Activated B cell treated with CpG ODN at 0.5 μM for 24 hours (primary cell): ENCODE measurements at regions of chr3 and their contacts with region 1.

Region 1: GRCh38 chr3:187745201-187746058 is at the start of gene BCL6:
- DNase-seq: peak; percentile 77
- ATAC-seq: peak; percentile 60
- H3K4me3 Mint-ChIP-seq: peak within 1 kb of the TSS; percentile 98
- H3K27ac Mint-ChIP-seq: peak within 1 kb of the TSS; percentile 98
- H3K4me1 Mint-ChIP-seq: peaks cover 79% of the 10 kb centered on the region
- H3K27me3 Mint-ChIP-seq: no peaks in the 10 kb centered on the region
- CTCF ChIP-seq: no peak
- total RNA-seq, gene BCL6: 100 and 112 TPM in 2 replicates

Region 2: GRCh38 chr3:187567661-187568121 is 177.7 kb before region 1 on chr3:
- CTCF ChIA-PET with region 1: no interaction called
- POLR2A ChIA-PET with region 1: no interaction called
- intact Hi-C with region 1: no loop called
- DNase-seq: no peak
- ATAC-seq: no peak
- H3K4me3 Mint-ChIP-seq: no peak overlapping the region
- H3K27ac Mint-ChIP-seq: no peak overlapping the region
- H3K4me1 Mint-ChIP-seq: no peaks in the 10 kb centered on the region
- H3K27me3 Mint-ChIP-seq: peaks cover 7% of the 10 kb centered on the region
- CTCF ChIP-seq: no peak

Region 3: DNA sequence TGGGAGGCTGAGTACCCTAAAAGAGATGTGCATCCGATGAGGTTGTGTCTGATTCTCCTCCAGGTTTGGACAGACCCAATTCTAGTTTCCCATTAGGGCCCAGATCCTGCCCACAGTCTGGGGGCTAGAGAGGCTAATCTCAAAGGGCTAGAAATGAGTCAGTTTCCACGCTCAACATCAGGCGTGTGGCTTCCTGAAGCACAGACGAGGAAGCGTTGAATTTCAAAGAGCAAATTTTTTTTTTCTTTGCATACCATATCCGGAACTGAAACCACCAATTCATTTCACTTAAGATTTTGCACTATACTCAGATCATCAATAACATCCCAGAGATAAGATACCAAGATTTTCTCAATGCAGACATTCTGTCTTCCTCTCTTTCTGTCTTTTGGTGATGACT is 173.6 kb after region 1 on chr3:
- CTCF ChIA-PET with region 1: interaction called, 5 read pairs
- POLR2A ChIA-PET with region 1: interaction called, 3 read pairs
- intact Hi-C with region 1: loop called (anchors 1 kb)
- DNase-seq: peak; percentile 36
- ATAC-seq: peak; percentile 89
- H3K4me3 Mint-ChIP-seq: peak overlapping the region; percentile 77
- H3K27ac Mint-ChIP-seq: peak overlapping the region; percentile 86
- H3K4me1 Mint-ChIP-seq: peaks cover 32% of the 10 kb centered on the region
- H3K27me3 Mint-ChIP-seq: peaks cover 15% of the 10 kb centered on the region
- CTCF ChIP-seq: no peak

Region 4: DNA sequence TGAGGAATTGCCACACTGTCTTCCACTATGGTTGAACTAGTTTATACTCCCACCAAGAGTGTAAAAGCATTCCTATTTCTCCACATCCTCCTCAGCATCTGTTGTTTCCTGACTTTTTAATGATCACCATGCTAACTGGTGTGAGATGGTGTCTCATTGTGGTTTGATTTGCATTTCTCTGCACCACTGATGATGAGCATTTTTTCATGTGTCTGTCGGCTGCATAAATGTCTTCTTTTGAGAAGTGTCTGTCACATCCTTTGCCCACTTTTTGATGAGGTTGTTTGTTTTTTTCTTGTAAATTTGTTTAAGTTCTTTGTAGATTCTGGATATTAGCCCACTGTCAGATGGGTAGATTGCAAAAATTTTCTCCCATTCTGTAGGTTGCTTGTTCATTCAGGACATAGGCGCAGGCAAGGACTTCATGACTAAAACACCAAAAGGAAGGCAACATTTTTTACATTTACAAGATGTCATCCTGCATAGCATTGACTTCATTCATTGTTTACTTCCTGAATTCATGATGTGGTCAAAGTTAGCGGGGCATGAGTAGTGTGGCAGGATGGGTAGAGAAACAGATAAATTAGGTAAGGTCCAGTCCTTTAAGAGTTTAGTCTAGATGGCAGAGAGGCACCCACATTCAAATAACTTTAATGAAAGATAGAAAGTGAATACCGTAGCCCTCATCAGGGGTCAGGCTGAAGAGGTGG is 363.4 kb after region 1 on chr3:
- CTCF ChIA-PET with region 1: no interaction called
- POLR2A ChIA-PET with region 1: interaction called, 4 read pairs
- intact Hi-C with region 1: loop called (anchors 5 kb)
- DNase-seq: no peak
- ATAC-seq: peak; percentile 73
- H3K4me3 Mint-ChIP-seq: peak overlapping the region; percentile 42
- H3K27ac Mint-ChIP-seq: peak overlapping the region; percentile 78
- H3K4me1 Mint-ChIP-seq: peaks cover 26% of the 10 kb centered on the region
- H3K27me3 Mint-ChIP-seq: no peaks in the 10 kb centered on the region
- CTCF ChIP-seq: no peak

Region 5: GRCh38 chr3:188294823-188295487 is 549.5 kb after region 1 on chr3:
- CTCF ChIA-PET with region 1: interaction called, 5 read pairs
- POLR2A ChIA-PET with region 1: interaction called, 20 read pairs
- intact Hi-C with region 1: no loop called
- DNase-seq: no peak
- ATAC-seq: no peak
- H3K4me3 Mint-ChIP-seq: peak overlapping the region; percentile 17
- H3K27ac Mint-ChIP-seq: peak overlapping the region; percentile 25
- H3K4me1 Mint-ChIP-seq: peaks cover 85% of the 10 kb centered on the region
- H3K27me3 Mint-ChIP-seq: no peaks in the 10 kb centered on the region
- CTCF ChIP-seq: no peak

Region 6: GRCh38 chr3:188362405-188362831 is 617.0 kb after region 1 on chr3:
- CTCF ChIA-PET with region 1: interaction called, 15 read pairs
- POLR2A ChIA-PET with region 1: interaction called, 51 read pairs
- intact Hi-C with region 1: loop called (anchors 1 kb)
- DNase-seq: no peak
- ATAC-seq: peak; percentile 63
- H3K4me3 Mint-ChIP-seq: peak overlapping the region; percentile 24
- H3K27ac Mint-ChIP-seq: peak overlapping the region; percentile 80
- H3K4me1 Mint-ChIP-seq: peaks cover 78% of the 10 kb centered on the region
- H3K27me3 Mint-ChIP-seq: no peaks in the 10 kb centered on the region
- CTCF ChIP-seq: no peak

Region 7: DNA sequence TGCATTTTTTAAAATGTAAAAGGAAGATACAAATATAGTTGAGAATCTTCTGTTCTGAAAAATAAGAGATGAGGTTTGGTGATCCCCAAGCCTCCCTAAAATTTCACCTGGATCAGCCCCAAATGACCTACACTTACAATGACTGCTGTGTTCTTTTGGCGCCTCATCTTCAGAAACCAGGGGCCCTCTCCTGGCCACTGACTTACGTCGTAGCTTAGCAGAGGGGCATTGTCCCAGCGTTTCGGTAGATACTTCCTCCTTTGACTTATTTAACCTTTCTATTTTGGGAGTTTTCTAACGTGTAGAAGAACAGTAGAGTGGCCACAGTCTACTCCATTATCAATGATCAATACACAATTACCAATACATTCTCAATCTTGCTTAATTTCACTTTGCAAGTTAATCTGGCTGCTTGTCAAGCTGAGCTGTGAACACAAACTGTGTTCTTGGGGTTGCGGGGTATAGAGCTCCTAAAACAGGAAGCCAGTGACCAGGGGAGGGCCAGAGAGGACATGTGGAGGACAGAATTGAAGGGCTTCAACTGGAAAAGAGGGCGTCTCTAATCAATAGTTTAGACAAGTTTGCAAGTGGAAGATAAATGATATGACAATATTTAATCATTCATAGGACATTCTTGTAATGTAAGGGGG is 828.0 kb after region 1 on chr3:
- CTCF ChIA-PET with region 1: interaction called, 22 read pairs
- POLR2A ChIA-PET with region 1: interaction called, 10 read pairs
- intact Hi-C with region 1: no loop called
- DNase-seq: no peak
- ATAC-seq: peak; percentile 71
- H3K4me3 Mint-ChIP-seq: peak overlapping the region; percentile 39
- H3K27ac Mint-ChIP-seq: peak overlapping the region; percentile 82
- H3K4me1 Mint-ChIP-seq: peaks cover 32% of the 10 kb centered on the region
- H3K27me3 Mint-ChIP-seq: no peaks in the 10 kb centered on the region
- CTCF ChIP-seq: no peak

Region 8: DNA sequence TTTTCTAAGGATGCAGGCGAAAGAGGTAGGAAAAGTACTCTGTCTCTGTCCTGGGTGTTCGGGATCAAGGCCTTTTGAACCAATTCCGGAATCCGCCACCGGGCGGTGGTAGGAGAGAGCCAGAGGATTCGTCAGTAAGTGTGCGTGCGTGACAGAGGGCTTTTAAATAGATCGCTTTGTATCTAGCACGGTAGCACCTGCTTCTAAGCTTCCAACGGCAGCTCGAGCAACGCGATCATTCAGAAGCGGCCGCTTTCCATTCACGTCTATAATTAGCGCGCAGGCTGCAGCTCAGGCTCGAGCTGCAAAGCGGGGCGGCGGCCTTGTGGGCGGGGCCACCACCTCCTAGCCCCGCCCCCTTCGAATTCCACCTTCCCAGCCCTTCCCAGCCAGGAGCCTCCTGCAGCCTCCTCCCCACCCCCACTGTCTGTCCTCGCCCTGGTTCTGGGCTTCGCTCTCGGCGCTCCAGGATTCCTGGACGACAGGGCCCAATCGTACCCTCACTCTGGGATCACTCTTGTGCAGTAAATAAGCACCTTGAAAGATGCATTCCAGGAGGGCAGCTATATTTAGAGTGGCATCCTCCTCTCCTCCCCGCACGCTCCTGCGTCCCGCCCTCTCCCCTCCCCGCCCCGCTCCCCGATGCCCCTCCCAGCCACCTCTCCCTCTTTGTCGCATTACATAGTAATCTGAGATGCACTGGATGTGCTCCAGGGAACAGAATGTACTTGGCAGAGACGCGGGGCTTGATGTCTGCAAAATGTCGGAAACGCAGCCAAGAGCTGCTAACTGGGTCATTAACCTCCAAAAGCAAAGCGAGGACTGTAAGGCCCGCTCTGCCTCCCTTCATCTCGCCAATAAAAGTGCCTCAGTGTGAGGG is 1202.2 kb after region 1 on chr3:
- CTCF ChIA-PET with region 1: interaction called, 545 read pairs
- POLR2A ChIA-PET with region 1: interaction called, 137 read pairs
- intact Hi-C with region 1: no loop called
- DNase-seq: no peak
- ATAC-seq: peak; percentile 19
- H3K4me3 Mint-ChIP-seq: peak overlapping the region; percentile 70
- H3K27ac Mint-ChIP-seq: no peak overlapping the region
- H3K4me1 Mint-ChIP-seq: peaks cover 43% of the 10 kb centered on the region
- H3K27me3 Mint-ChIP-seq: peaks cover 13% of the 10 kb centered on the region
- CTCF ChIP-seq: no peak